Activated CD4-positive, alpha-beta T cell treated with anti-CD3 and anti-CD28 coated beads for 36 hours (primary cell): ENCODE measurements at regions of chr19 and their contacts with region 1.

Region 1: GRCh38 chr19:29528350-29528945 is 2.7 kb downstream of the VSTM2B start:
- DNase-seq: peak; percentile 89
- ATAC-seq: peak; percentile 84
- H3K4me3 Mint-ChIP-seq: peak overlapping the region; percentile 52
- H3K27ac Mint-ChIP-seq: no peak overlapping the region
- H3K4me1 Mint-ChIP-seq: peaks cover 22% of the 10 kb centered on the region
- H3K27me3 Mint-ChIP-seq: peaks cover 63% of the 10 kb centered on the region

Region 2: GRCh38 chr19:29212648-29213573 is 315.5 kb before region 1 on chr19 and contains the start of gene UQCRFS1:
- CTCF ChIA-PET with region 1: no interaction called
- POLR2A ChIA-PET with region 1: no interaction called
- intact Hi-C with region 1: loop called in 1 of 2 experiments (anchors 5 kb)
- DNase-seq: peak; percentile 98
- ATAC-seq: peak; percentile 98
- H3K4me3 Mint-ChIP-seq: peak within 1 kb of the TSS; percentile 95
- H3K27ac Mint-ChIP-seq: peak within 1 kb of the TSS; percentile 95
- H3K4me1 Mint-ChIP-seq: peaks cover 48% of the 10 kb centered on the region
- H3K27me3 Mint-ChIP-seq: peaks cover 3% of the 10 kb centered on the region
- total RNA-seq, gene UQCRFS1: 39.1 to 45.3 TPM

Region 3: DNA sequence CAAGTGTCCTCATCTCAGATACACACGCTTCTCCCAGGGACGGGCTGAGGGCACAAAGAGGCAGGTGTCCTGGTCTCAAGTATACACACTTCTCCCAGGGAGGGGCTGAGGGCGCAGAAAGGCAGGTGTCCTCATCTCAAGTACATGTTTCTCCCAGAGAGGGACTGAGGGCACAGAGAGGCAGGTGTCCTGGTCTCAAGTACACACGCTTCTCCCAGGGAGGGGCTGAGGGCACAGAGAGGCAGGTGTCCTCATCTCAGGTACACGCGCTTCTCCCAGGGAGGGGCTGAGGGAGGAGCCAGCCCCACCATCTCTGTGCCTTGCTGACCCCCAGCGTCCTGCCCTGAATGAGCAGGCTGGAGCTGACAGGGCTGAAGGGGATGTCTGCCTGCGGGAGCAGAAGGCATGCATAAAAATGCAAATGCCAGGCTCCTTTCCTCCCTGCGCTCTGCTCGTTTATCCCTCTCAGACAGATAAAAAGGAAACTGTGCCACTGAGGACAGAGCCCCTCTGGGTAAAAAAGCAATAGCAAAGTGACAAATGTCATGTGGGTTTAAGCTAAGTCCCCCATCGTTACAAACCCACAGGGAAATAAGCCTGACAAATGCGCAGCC is 219.4 kb before region 1 on chr19:
- CTCF ChIA-PET with region 1: no interaction called
- POLR2A ChIA-PET with region 1: no interaction called
- intact Hi-C with region 1: loop called in 1 of 2 experiments (anchors 10 kb)
- DNase-seq: no peak
- ATAC-seq: no peak
- H3K4me3 Mint-ChIP-seq: no peak overlapping the region
- H3K27ac Mint-ChIP-seq: no peak overlapping the region
- H3K4me1 Mint-ChIP-seq: no peaks in the 10 kb centered on the region
- H3K27me3 Mint-ChIP-seq: peaks cover 29% of the 10 kb centered on the region

Region 4: GRCh38 chr19:29587518-29587986 is 59.1 kb after region 1 on chr19:
- CTCF ChIA-PET with region 1: no interaction called
- POLR2A ChIA-PET with region 1: no interaction called
- intact Hi-C with region 1: loop called in 1 of 2 experiments (anchors 5 kb)
- DNase-seq: peak; percentile 87
- ATAC-seq: peak; percentile 99
- H3K4me3 Mint-ChIP-seq: no peak overlapping the region
- H3K27ac Mint-ChIP-seq: peak overlapping the region; percentile 89
- H3K4me1 Mint-ChIP-seq: peaks cover 30% of the 10 kb centered on the region
- H3K27me3 Mint-ChIP-seq: peaks cover 27% of the 10 kb centered on the region

Region 5: GRCh38 chr19:31349160-31349881 is 1820.9 kb after region 1 on chr19 and contains the start of gene TSHZ3:
- CTCF ChIA-PET with region 1: no interaction called
- POLR2A ChIA-PET with region 1: no interaction called
- intact Hi-C with region 1: loop called in 1 of 2 experiments (anchors 5 kb)
- DNase-seq: peak; percentile 71
- ATAC-seq: peak; percentile 48
- H3K4me3 Mint-ChIP-seq: peak within 1 kb of the TSS; percentile 70
- H3K27ac Mint-ChIP-seq: no peak within 1 kb of the TSS
- H3K4me1 Mint-ChIP-seq: peaks cover 31% of the 10 kb centered on the region
- H3K27me3 Mint-ChIP-seq: peaks cover 50% of the 10 kb centered on the region
- total RNA-seq, gene TSHZ3: 0.85 to 1.6 TPM